Activated naive CD4-positive, alpha-beta T cell treated with anti-CD3 and anti-CD28 coated beads for 36 hours (primary cell): ENCODE measurements at regions of chr20 and their contacts with region 1.

Region 1: DNA sequence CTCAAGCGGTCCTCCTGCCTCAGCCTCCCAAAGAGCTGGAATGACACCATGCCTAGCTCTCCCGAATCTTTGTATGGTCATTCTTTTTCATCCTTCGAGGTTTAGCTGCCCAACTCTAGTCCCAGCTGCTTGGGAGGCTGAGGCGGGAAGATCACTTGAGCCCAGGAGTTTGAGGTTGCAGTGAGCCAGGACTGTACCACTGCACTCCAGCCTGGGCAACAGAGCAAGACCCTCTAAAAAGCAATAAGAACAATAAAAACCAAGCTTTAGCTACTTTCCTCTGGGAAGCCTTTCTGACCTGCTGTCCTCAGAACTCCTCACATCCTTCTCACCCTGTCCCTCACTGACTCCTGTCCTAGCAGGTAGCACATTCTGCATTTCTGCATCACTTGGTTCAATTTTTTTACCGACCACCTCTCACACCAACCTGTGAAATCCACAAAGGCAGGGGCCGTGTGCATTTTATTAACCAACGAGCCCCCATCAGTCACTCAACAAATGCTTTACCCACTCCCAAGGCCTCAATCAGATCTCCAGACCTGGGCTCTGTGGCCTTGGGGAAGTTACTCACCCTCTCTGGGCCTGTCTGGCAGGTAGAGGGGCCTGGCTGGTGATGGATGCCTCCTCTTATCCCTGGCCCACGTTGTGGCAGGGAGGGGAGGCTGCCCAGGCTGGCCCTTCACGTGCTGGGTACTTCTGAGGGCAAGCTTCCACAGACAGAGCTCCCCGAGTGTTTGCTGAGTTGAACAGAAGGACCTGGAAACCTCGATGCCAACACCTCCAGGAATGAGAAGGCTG is 14.7 kb upstream of the SRC start:
- DNase-seq: no peak
- H3K4me3 Mint-ChIP-seq: no peak overlapping the region
- H3K27ac Mint-ChIP-seq: no peak overlapping the region
- H3K4me1 Mint-ChIP-seq: peaks cover 8% of the 10 kb centered on the region
- H3K27me3 Mint-ChIP-seq: no peaks in the 10 kb centered on the region

Region 2: DNA sequence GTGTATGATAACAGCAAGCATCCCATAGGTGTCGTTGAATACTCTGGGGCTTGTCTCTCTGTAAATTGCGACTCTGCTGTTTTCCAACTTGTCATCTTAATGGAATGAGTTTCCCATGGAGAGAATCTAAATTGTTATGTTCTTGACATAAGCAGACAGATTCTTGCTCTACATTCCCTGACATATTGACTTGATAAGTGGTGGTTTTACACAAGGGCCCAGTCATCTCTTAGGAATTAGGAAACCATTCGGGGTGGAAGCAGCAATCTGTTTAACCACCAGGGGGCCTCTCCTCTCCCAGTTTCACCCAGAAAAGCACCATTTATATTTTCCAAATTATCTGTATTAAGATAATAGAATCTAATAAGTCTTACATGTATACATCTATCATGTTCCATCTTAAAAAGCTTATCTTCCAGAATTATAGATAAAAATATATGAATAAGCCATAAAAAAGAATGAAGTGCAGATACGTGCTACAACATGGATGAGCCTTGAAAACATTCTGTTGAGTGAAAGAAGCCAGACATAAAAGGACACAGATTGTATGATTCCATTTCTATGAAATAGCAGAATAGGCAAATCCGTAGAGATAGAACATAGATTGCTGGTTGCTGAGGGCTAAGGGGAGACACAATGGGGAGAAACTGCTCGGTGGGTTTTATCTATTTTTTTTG is 128.9 kb before region 1 on chr20:
- CTCF ChIA-PET with region 1: no interaction called
- intact Hi-C with region 1: no loop called
- DNase-seq: peak; percentile 37
- H3K4me3 Mint-ChIP-seq: no peak overlapping the region
- H3K27ac Mint-ChIP-seq: no peak overlapping the region
- H3K4me1 Mint-ChIP-seq: no peaks in the 10 kb centered on the region
- H3K27me3 Mint-ChIP-seq: no peaks in the 10 kb centered on the region

Region 3: DNA sequence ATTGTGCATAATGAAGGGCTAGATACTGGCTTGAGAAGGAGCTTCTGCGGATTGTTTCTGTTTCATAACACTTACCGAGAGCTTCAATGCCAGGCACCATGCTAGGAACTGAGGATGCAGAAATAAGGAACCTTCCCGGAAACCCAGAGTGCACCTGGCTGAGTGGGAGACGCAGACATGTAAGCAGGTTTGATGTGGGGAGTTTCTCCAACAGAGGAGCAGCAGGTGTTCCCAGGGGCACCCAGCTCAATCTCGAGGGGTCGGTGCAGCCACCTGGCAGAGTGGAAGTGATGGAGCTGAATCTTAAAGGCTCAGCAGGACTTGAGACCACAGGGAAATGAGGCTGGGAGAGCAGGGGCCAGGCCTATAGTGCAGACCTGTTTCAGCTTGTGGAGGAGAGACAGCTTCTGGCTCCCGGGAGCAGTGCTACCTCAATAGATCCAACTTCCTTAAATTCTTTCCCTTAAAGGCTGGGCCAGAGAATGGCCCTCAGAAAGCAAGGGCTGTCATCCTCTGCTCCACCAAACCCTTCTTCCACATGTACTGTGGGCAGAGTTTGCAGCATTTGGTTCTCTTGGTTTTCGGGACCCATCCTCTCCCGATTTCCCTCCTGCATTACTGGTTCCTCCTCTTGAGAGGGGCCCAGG is 13.1 kb before region 1 on chr20:
- CTCF ChIA-PET with region 1: interaction called, 10 read pairs
- intact Hi-C with region 1: no loop called
- DNase-seq: no peak
- H3K4me3 Mint-ChIP-seq: no peak overlapping the region
- H3K27ac Mint-ChIP-seq: no peak overlapping the region
- H3K4me1 Mint-ChIP-seq: peaks cover 28% of the 10 kb centered on the region
- H3K27me3 Mint-ChIP-seq: no peaks in the 10 kb centered on the region

Region 4: GRCh38 chr20:37384683-37385174 is 53.5 kb after region 1 on chr20:
- CTCF ChIA-PET with region 1: no interaction called
- intact Hi-C with region 1: no loop called
- DNase-seq: peak; percentile 78
- H3K4me3 Mint-ChIP-seq: peak overlapping the region; percentile 65
- H3K27ac Mint-ChIP-seq: no peak overlapping the region
- H3K4me1 Mint-ChIP-seq: peaks cover 8% of the 10 kb centered on the region
- H3K27me3 Mint-ChIP-seq: peaks cover 4% of the 10 kb centered on the region